Activated B cell treated with CpG ODN at 0.5 μM for 24 hours (primary cell): ENCODE measurements at regions of chr6 and their contacts with region 1.

Region 1: GRCh38 chr6:51855310-51856082 is 231.9 kb downstream of the PKHD1 start:
- DNase-seq: no peak
- ATAC-seq: no peak
- H3K4me3 Mint-ChIP-seq: no peak overlapping the region
- H3K27ac Mint-ChIP-seq: no peak overlapping the region
- H3K4me1 Mint-ChIP-seq: no peaks in the 10 kb centered on the region
- H3K27me3 Mint-ChIP-seq: peaks cover 18% of the 10 kb centered on the region
- CTCF ChIP-seq: peak; percentile 30

Region 2: GRCh38 chr6:51959744-51960383 is 104.4 kb after region 1 on chr6:
- CTCF ChIA-PET with region 1: interaction called, 3 read pairs
- POLR2A ChIA-PET with region 1: no interaction called
- intact Hi-C with region 1: loop called (anchors 1 kb)
- DNase-seq: peak; percentile 17
- ATAC-seq: no peak
- H3K4me3 Mint-ChIP-seq: no peak overlapping the region
- H3K27ac Mint-ChIP-seq: no peak overlapping the region
- H3K4me1 Mint-ChIP-seq: no peaks in the 10 kb centered on the region
- H3K27me3 Mint-ChIP-seq: peaks cover 1% of the 10 kb centered on the region
- CTCF ChIP-seq: no peak

Region 3: DNA sequence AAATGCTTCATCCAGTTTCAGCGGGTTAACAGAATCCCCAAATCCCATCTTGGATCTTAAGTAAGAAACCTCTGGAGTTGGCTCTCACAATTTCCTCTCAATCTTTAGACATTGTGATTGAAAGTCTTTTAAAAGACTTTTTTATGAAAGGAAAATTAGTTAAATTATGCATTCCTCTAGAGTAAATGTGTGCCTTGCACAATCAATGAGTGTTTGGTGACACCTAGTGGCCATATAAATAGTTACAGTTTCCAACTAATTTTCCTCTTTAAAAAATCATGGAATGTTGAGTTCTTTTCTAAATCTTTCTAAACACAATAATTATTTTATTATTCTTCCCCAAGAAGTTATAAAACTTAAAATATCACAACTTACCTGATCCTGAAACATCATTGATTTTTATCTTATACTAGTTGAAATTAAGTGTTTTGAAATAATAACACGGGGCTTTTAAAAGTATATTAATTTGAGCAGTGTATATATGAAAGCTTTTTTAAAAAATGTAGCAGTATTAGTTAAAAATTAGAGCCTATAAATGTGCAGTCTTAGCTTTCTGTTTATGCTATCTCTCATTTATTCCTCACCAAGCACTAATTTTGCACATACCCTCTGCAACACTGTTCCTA is 165.6 kb after region 1 on chr6:
- CTCF ChIA-PET with region 1: interaction called, 26 read pairs
- POLR2A ChIA-PET with region 1: no interaction called
- intact Hi-C with region 1: loop called (anchors 1 kb)
- DNase-seq: no peak
- ATAC-seq: no peak
- H3K4me3 Mint-ChIP-seq: no peak overlapping the region
- H3K27ac Mint-ChIP-seq: no peak overlapping the region
- H3K4me1 Mint-ChIP-seq: peaks cover under 1% of the 10 kb centered on the region
- H3K27me3 Mint-ChIP-seq: peaks cover 7% of the 10 kb centered on the region
- CTCF ChIP-seq: peak; percentile 74

Region 4: GRCh38 chr6:52049252-52050050 is 194.0 kb after region 1 on chr6:
- CTCF ChIA-PET with region 1: interaction called, 6 read pairs
- POLR2A ChIA-PET with region 1: no interaction called
- intact Hi-C with region 1: loop called (anchors 1 kb)
- DNase-seq: no peak
- ATAC-seq: no peak
- H3K4me3 Mint-ChIP-seq: no peak overlapping the region
- H3K27ac Mint-ChIP-seq: no peak overlapping the region
- H3K4me1 Mint-ChIP-seq: no peaks in the 10 kb centered on the region
- H3K27me3 Mint-ChIP-seq: peaks cover 14% of the 10 kb centered on the region
- CTCF ChIP-seq: no peak